ENCODE measurements at regions of chr22 and their contacts with region 1.

Region 1: DNA sequence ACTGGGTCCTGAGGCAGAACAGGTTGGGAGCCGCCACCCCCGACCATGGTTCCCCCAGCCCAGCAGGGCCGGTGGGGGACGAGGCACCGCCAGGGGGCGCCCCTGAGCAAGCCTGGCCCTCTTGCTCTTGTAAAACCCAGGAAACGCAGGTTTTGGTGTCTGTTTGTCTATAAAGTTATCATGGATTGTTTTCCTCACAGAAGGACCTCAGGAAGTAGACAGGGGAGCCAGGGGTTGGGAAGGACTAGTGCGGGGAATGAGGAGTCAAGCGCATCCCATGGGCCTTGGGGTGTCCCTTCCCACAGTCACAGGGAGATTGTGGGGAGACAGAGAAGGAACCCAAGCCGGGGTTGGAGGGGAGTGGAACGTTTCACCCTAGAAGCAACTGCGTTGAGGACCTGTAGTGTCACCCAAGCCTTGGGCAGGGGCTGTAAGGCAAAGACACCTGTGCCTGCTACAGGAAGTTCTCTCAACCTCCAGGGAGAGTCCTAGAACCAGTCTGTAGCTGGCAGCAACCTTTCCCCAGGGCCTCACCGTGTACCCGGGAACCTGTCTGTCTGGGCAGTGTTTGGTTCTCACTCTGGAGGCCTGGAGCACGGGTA is 26.4 kb downstream of the KCTD17 start:
- DNase-seq: peak; percentile 58 to 78 (median 72)
- H3K4me3 ChIP-seq: no peak overlapping the region
- H3K27ac ChIP-seq: no peak overlapping the region
- H3K4me1 ChIP-seq: no peaks in the 10 kb centered on the region
- H3K27me3 ChIP-seq: no peaks in the 10 kb centered on the region
- CTCF ChIP-seq: peak; percentile 81 to 99 (median 88)
- POLR2A ChIP-seq: no peak

Region 2: DNA sequence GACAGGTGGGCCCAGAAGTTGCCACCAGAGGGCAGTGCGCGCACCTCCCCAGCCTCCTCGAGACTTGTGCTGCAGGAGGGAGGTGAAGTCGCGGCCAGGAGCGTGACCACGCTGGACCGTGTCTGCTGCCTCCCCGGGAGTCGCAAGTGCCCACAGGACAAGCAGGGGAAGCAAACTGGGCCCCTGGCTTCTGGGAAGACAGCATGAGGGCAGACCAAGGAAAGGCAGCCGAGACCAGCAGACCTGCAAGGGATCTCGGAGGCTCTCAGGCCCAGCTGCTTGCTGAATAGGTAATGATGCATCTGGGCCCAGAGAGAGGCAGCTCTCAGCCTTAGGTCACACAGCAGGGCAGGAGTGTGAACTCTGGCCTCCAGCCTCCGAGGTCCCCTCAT is 88.7 kb after region 1 on chr22:
- intact Hi-C with region 1: loop called (anchors 5 to 10 kb)
- DNase-seq: peak; percentile 86 to 95 (median 92)
- H3K4me3 ChIP-seq: peak overlapping the region in 1 of 4 donors; percentile 35
- H3K27ac ChIP-seq: peak overlapping the region in 2 of 5 donors; percentile 17 to 64
- H3K4me1 ChIP-seq: peaks cover 13 to 19% of the 10 kb centered on the region in 2 donors
- H3K27me3 ChIP-seq: no peaks in the 10 kb centered on the region
- CTCF ChIP-seq: peak; percentile 92 to 96 (median 94)
- POLR2A ChIP-seq: no peak